GM12878 (cell line): ENCODE measurements at regions of chr4 and their contacts with region 1.

Region 1: DNA sequence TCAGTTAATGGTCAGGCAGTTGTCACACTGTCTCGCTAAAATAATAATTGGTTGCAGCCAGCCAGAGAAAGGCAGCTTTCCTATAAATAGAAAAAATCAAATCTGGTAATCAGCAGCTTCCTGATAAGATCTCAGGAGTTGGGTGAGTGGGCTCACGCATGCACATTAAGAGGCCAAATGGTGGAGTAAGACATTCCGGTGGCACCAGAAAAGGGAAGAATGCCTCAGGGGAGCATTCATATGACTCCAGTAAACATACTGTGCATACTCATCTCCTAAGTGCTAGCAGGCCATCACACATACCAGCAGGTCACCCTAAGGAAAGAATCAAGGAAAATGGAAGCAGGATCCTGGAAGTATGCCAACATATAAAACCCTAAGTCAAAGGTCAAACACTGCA is 40.1 kb downstream of the UGT2B15 start:
- DNase-seq: no peak
- ATAC-seq: no peak
- H3K4me3 ChIP-seq: no peak overlapping the region
- H3K27ac ChIP-seq: no peak overlapping the region
- H3K4me1 ChIP-seq: no peaks in the 10 kb centered on the region
- H3K27me3 ChIP-seq: no peaks in the 10 kb centered on the region
- CTCF ChIP-seq: no peak
- EP300 ChIP-seq: no peak
- POLR2A ChIP-seq: no peak
- RAD21 ChIP-seq: no peak

Region 2: GRCh38 chr4:68518889-68519288 is 111.5 kb before region 1 on chr4:
- CTCF ChIA-PET with region 1: no interaction called
- POLR2A ChIA-PET with region 1: no interaction called
- RAD21 ChIA-PET with region 1: no interaction called
- SMC1A ChIA-PET with region 1: no interaction called
- in situ Hi-C with region 1: loop called (anchors 25 kb)
- intact Hi-C with region 1: no loop called
- DNase-seq: no peak
- ATAC-seq: no peak
- H3K4me3 ChIP-seq: no peak overlapping the region
- H3K27ac ChIP-seq: no peak overlapping the region
- H3K4me1 ChIP-seq: no peaks in the 10 kb centered on the region
- H3K27me3 ChIP-seq: no peaks in the 10 kb centered on the region
- CTCF ChIP-seq: no peak
- EP300 ChIP-seq: no peak
- POLR2A ChIP-seq: no peak
- RAD21 ChIP-seq: no peak

Region 3: DNA sequence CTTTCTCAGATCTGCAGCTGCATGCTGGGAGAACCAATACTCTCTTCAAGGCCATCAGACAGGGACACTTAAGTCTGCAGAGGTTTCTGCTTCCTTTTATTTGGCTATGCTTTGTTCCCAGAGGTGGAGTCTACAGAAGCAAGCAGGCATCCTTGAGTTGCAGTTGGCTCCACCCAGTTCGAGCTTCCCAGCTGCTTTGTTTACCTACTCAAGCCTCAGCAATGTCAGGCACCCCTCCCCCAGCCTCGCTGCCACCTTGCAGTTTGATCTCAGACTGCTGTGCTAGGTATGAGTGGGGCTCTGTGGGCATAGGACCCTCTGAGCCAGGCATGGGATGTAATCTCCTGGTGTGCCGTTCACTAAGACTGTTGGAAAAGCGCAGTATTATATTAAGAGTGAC is 52.6 kb after region 1 on chr4:
- CTCF ChIA-PET with region 1: no interaction called
- POLR2A ChIA-PET with region 1: no interaction called
- RAD21 ChIA-PET with region 1: no interaction called
- SMC1A ChIA-PET with region 1: no interaction called
- in situ Hi-C with region 1: no loop called
- intact Hi-C with region 1: loop called (anchors 10 kb)
- DNase-seq: no peak
- ATAC-seq: no peak
- H3K4me3 ChIP-seq: no peak overlapping the region
- H3K27ac ChIP-seq: no peak overlapping the region
- H3K4me1 ChIP-seq: no peaks in the 10 kb centered on the region
- H3K27me3 ChIP-seq: no peaks in the 10 kb centered on the region
- CTCF ChIP-seq: no peak
- EP300 ChIP-seq: no peak
- POLR2A ChIP-seq: no peak
- RAD21 ChIP-seq: no peak

Region 4: GRCh38 chr4:68745472-68745812 is 115.1 kb after region 1 on chr4:
- CTCF ChIA-PET with region 1: no interaction called
- POLR2A ChIA-PET with region 1: no interaction called
- RAD21 ChIA-PET with region 1: no interaction called
- SMC1A ChIA-PET with region 1: no interaction called
- in situ Hi-C with region 1: no loop called
- intact Hi-C with region 1: no loop called
- DNase-seq: no peak
- ATAC-seq: no peak
- H3K4me3 ChIP-seq: no peak overlapping the region
- H3K27ac ChIP-seq: no peak overlapping the region
- H3K4me1 ChIP-seq: no peaks in the 10 kb centered on the region
- H3K27me3 ChIP-seq: no peaks in the 10 kb centered on the region
- CTCF ChIP-seq: no peak
- EP300 ChIP-seq: no peak
- POLR2A ChIP-seq: no peak
- RAD21 ChIP-seq: no peak

Region 5: GRCh38 chr4:69830560-69831289 is 1200.4 kb after region 1 on chr4:
- CTCF ChIA-PET with region 1: no interaction called
- POLR2A ChIA-PET with region 1: no interaction called
- RAD21 ChIA-PET with region 1: no interaction called
- SMC1A ChIA-PET with region 1: no interaction called
- in situ Hi-C with region 1: loop called (anchors 25 kb)
- intact Hi-C with region 1: no loop called
- DNase-seq: no peak
- ATAC-seq: peak; percentile 25
- H3K4me3 ChIP-seq: no peak overlapping the region
- H3K27ac ChIP-seq: no peak overlapping the region
- H3K4me1 ChIP-seq: peaks cover 19% of the 10 kb centered on the region
- H3K27me3 ChIP-seq: no peaks in the 10 kb centered on the region
- CTCF ChIP-seq: no peak
- EP300 ChIP-seq: no peak
- POLR2A ChIP-seq: no peak
- RAD21 ChIP-seq: no peak